ENCODE measurements at regions of chr10 and their contacts with region 1.

Region 1: GRCh38 chr10:131453594-131454355 is 142.3 kb upstream of the TCERG1L start:
- DNase-seq: peak; percentile 41
- H3K27ac ChIP-seq: no peak overlapping the region
- CTCF ChIP-seq: peak; percentile 36

Region 2: DNA sequence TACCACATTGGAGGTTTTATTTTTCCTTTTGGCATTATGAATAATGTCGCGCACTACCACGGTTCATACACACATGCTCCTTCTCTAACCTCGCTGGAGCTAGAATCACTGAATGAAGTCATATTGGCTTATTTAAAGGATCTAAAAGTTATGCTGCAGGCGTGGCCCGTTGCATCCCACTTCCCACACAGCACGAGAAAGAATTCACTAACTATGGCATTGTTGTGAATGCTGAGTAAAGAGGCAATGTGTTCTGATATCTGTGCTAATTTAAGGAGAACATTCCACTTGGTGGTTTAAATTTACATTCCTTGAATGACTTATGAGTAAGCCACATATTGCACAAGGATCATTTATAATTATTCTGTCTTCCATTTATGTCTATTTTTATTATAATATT is 163.0 kb before region 1 on chr10:
- CTCF ChIA-PET with region 1: no interaction called
- POLR2A ChIA-PET with region 1: no interaction called
- DNase-seq: peak; percentile 13
- H3K27ac ChIP-seq: no peak overlapping the region
- CTCF ChIP-seq: no peak

Region 3: DNA sequence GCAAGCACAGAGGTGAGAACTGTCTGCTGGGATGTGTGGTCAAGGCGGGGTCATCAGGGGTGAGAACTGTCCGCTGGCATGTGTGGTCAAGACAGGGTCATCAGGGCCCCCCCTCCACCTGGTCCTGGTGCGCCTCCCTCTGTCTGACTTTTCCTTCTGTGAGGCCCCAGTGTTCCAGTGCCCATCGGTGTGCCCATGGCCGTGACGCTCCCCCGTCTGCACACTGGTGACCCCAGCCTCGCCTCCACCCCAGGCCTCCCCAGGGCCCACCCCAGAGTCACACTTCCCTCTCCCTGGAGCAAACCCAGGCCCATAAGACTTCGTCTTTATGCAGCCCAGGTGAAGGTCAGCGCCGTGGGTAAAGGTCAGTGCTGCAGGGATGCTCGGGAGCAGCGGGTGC is 72.2 kb before region 1 on chr10:
- CTCF ChIA-PET with region 1: no interaction called
- POLR2A ChIA-PET with region 1: no interaction called
- DNase-seq: no peak
- H3K27ac ChIP-seq: no peak overlapping the region
- CTCF ChIP-seq: no peak

Region 4: DNA sequence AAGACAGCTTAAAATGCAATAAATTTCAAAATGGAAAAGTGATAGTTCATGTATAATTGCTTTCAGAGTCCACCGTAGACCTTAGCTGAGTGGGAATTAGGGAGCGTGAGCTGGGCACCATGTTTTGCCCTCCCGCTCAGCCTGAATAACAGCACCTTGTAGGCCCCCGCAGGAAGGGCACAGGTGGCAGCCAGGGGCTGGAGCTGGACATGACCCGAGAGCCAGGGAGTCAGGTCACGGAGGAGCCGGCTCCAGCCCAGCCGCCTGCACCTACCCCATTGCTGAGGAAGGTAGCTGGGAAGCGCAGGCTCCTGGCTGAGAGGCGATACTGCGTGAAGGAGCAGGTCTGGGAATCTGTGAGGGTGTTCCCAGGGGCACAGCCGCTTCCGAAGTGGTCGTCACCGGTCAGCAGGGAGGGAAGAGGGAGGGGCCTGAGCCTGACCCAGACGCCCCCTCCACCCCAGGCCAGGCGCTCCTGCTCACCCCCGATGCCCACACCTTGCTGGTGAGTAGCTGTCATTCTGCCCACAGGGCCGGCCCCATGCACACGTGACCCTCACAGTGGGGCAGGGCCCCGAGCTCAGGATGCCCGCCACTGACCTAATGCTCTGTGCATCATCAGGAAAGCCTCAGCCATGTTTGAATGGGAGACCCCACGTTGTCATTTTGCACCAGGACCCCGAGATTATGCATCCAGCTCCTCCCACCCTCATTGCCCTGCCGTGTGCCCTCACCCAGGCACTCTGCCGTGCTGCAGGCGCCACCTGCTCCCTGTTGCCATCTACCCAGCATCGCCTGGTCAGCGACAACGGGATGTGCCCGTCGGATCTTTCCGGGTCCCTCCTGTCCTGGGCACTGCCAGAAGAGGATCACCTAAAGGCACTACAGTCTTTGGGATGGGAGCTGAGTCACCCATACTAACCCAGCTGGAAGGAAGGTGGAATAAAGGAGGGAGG is 13.1 kb before region 1 on chr10:
- CTCF ChIA-PET with region 1: interaction called, 11 read pairs
- POLR2A ChIA-PET with region 1: no interaction called
- DNase-seq: no peak
- H3K27ac ChIP-seq: no peak overlapping the region
- CTCF ChIP-seq: no peak

Region 5: DNA sequence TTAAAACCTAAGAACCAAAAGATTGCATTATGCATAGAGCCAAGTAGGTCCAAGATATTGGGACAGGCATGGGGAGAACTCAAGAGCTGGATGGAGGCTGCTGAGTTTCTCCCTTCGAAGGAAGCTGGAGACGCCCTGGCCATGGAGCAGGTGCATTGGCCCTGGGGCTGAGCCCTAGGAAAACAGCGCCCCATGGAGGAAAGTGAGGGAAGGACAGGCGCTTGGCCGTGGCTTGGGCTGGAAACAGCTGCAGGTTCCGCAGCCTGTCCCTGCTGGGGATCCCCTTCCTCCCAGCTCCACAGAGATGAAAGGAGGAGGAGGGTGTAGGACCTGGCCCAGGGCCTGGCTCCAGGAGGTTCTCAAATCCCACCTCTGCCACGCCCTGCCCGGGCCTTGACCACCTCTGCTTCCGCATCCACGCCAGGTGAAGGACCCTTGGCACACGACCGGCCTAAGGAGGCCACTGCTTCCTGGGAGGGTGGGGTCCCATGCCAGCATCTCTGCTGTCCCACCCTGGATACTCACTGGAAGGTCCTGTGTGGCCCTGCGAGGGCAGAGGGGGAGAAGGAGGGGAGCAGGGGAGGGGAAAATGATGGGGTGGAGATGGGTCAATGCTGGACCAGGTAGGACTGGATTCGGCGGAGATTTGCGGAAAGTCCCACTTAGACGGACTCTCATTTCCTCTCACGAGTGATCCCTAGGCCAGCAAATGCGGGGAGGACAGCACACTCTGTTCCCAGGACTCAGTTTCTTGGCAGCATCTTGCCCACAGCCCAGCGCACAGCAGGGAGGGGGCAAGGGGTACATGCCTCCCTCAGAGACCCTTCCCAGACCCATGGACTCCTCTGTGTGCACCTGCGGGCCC is 116.3 kb after region 1 on chr10:
- CTCF ChIA-PET with region 1: no interaction called
- POLR2A ChIA-PET with region 1: no interaction called
- DNase-seq: no peak
- H3K27ac ChIP-seq: no peak overlapping the region
- CTCF ChIP-seq: no peak